ENCODE measurements at regions of chr11 and their contacts with region 1.

Region 1: GRCh38 chr11:57493507-57494503 is 21.7 kb downstream of the SLC43A1 start:
- DNase-seq: peak; percentile 95 to 96
- H3K4me3 ChIP-seq: no peak overlapping the region
- H3K4me3 Mint-ChIP-seq: peak overlapping the region; percentile 25
- H3K27ac Mint-ChIP-seq: peak overlapping the region; percentile 96
- H3K4me1 ChIP-seq: peaks cover 40% of the 10 kb centered on the region
- H3K4me1 Mint-ChIP-seq: peaks cover 28% of the 10 kb centered on the region
- H3K27me3 ChIP-seq: no peaks in the 10 kb centered on the region
- H3K27me3 Mint-ChIP-seq: no peaks in the 10 kb centered on the region
- CTCF ChIP-seq: peak; percentile 95 to 97

Region 2: GRCh38 chr11:57480409-57481137 is 13.2 kb before region 1 on chr11:
- CTCF ChIA-PET with region 1: interaction called, 36 read pairs
- POLR2A ChIA-PET with region 1: interaction called, 4 read pairs
- intact Hi-C with region 1: no loop called
- DNase-seq: peak; percentile 73 to 80
- H3K4me3 ChIP-seq: no peak overlapping the region
- H3K4me3 Mint-ChIP-seq: no peak overlapping the region
- H3K27ac Mint-ChIP-seq: peak overlapping the region; percentile 5
- H3K4me1 ChIP-seq: peaks cover 5% of the 10 kb centered on the region; the same call in 1 of the 2 replicates
- H3K4me1 Mint-ChIP-seq: peaks cover 16% of the 10 kb centered on the region
- H3K27me3 ChIP-seq: no peaks in the 10 kb centered on the region
- H3K27me3 Mint-ChIP-seq: no peaks in the 10 kb centered on the region
- CTCF ChIP-seq: peak; percentile 61 to 74

Region 3: DNA sequence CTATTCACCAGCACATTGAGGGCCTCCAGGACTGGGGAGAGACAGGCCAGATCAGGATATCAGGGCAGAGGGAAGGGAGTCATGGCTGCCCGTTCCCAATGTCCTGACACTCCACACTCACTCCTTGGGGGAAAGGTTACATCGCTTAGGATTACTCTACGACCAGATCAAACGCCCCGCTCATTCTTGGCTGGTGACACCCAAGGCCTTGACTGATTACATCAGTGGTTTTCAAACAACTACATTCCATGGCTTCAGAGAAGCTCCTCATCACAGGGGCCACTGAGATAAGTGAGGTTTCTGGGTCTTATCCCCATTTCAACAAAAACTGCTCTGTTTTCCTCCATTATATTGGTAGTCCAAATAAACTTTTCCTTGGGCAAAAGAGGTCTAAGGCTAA is 58.7 kb after region 1 on chr11:
- CTCF ChIA-PET with region 1: interaction called, 13 read pairs
- POLR2A ChIA-PET with region 1: interaction called, 13 read pairs
- intact Hi-C with region 1: loop called (anchors 1 kb)
- DNase-seq: peak; percentile 89 to 93
- H3K4me3 ChIP-seq: no peak overlapping the region; the same call in 1 of the 2 replicates
- H3K4me3 Mint-ChIP-seq: peak overlapping the region; percentile 75
- H3K27ac Mint-ChIP-seq: peak overlapping the region; percentile 99
- H3K4me1 ChIP-seq: peaks cover 44% of the 10 kb centered on the region
- H3K4me1 Mint-ChIP-seq: peaks cover 18% of the 10 kb centered on the region
- H3K27me3 ChIP-seq: no peaks in the 10 kb centered on the region
- H3K27me3 Mint-ChIP-seq: no peaks in the 10 kb centered on the region
- CTCF ChIP-seq: peak in 1 of 2 experiments; percentile 8

Region 4: GRCh38 chr11:57567515-57568329 is 73.9 kb after region 1 on chr11 and contains the start of gene UBE2L6:
- CTCF ChIA-PET with region 1: interaction called, 10 read pairs
- POLR2A ChIA-PET with region 1: no interaction called
- intact Hi-C with region 1: loop called (anchors 2 kb)
- DNase-seq: peak; percentile 55 to 67
- H3K4me3 ChIP-seq: peak within 1 kb of the TSS; percentile 54
- H3K4me3 Mint-ChIP-seq: peak within 1 kb of the TSS; percentile 96
- H3K27ac Mint-ChIP-seq: peak within 1 kb of the TSS; percentile 40
- H3K4me1 ChIP-seq: peaks cover 10% of the 10 kb centered on the region; the same call in 1 of the 2 replicates
- H3K4me1 Mint-ChIP-seq: peaks cover 14% of the 10 kb centered on the region
- H3K27me3 ChIP-seq: no peaks in the 10 kb centered on the region
- H3K27me3 Mint-ChIP-seq: no peaks in the 10 kb centered on the region
- CTCF ChIP-seq: peak in 1 of 2 experiments; percentile 49
- total RNA-seq, gene UBE2L6: 16.7 and 20.2 TPM in 2 replicates

Measured in Caco-2 (cell line).